GM12878 (cell line): ENCODE measurements at regions of chr12 and their contacts with region 1.

Region 1: GRCh38 chr12:124906606-124907261 is 7.7 kb downstream of the UBC start:
- DNase-seq: peak; percentile 87
- ATAC-seq: peak; percentile 59
- H3K4me3 ChIP-seq: no peak overlapping the region
- H3K27ac ChIP-seq: peak overlapping the region; percentile 47
- H3K4me1 ChIP-seq: peaks cover 34% of the 10 kb centered on the region
- H3K27me3 ChIP-seq: no peaks in the 10 kb centered on the region
- CTCF ChIP-seq: peak; percentile 91 to 100 (median 99); a peak in 5 of 6 replicates
- EP300 ChIP-seq: no peak
- POLR2A ChIP-seq: no peak
- RAD21 ChIP-seq: peak; percentile 98

Region 2: DNA sequence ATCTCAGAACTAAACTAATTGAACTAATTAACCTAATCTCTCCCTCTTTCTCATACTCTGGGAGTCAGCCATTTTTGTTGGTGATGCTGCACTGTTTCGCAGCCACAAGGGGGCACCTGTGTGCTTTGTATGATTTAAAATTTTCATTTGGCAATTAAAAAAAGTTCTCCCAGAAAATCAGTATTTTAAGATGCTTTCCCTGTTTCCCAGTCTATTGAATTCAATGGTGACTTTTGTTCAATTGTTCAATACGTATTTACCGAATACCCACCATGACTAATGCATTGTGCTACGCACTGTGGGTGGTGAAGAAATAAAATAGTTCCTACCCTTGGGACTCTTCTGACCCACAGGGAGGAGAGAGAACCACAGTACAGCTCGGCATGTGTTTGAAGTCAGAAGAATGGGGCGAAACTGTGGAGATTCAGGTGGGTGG is 870.0 kb before region 1 on chr12:
- CTCF ChIA-PET with region 1: interaction called, 7 read pairs
- POLR2A ChIA-PET with region 1: no interaction called
- RAD21 ChIA-PET with region 1: no interaction called
- SMC1A ChIA-PET with region 1: no interaction called
- in situ Hi-C with region 1: loop called (anchors 10 kb)
- intact Hi-C with region 1: loop called (anchors 5 kb)
- DNase-seq: peak; percentile 27
- ATAC-seq: peak; percentile 80
- H3K4me3 ChIP-seq: no peak overlapping the region
- H3K27ac ChIP-seq: no peak overlapping the region
- H3K4me1 ChIP-seq: no peaks in the 10 kb centered on the region
- H3K27me3 ChIP-seq: no peaks in the 10 kb centered on the region
- CTCF ChIP-seq: peak; percentile 80 to 89 (median 84)
- EP300 ChIP-seq: no peak
- POLR2A ChIP-seq: no peak
- RAD21 ChIP-seq: peak; percentile 92

Region 3: GRCh38 chr12:124829008-124829707 is 77.6 kb before region 1 on chr12:
- CTCF ChIA-PET with region 1: interaction called, 30 read pairs
- POLR2A ChIA-PET with region 1: interaction called, 3 read pairs
- RAD21 ChIA-PET with region 1: interaction called, 13 read pairs
- SMC1A ChIA-PET with region 1: interaction called, 22 read pairs
- in situ Hi-C with region 1: no loop called
- intact Hi-C with region 1: no loop called
- DNase-seq: no peak
- ATAC-seq: 0 out of 3 replicates have a peak, but pooled peaks have one; percentile 9
- H3K4me3 ChIP-seq: no peak overlapping the region
- H3K27ac ChIP-seq: peak overlapping the region; percentile 20; the same call in 1 of the 2 replicates
- H3K4me1 ChIP-seq: peaks cover 17% of the 10 kb centered on the region
- H3K27me3 ChIP-seq: no peaks in the 10 kb centered on the region
- CTCF ChIP-seq: no peak
- EP300 ChIP-seq: no peak
- POLR2A ChIP-seq: no peak
- RAD21 ChIP-seq: no peak

Region 4: DNA sequence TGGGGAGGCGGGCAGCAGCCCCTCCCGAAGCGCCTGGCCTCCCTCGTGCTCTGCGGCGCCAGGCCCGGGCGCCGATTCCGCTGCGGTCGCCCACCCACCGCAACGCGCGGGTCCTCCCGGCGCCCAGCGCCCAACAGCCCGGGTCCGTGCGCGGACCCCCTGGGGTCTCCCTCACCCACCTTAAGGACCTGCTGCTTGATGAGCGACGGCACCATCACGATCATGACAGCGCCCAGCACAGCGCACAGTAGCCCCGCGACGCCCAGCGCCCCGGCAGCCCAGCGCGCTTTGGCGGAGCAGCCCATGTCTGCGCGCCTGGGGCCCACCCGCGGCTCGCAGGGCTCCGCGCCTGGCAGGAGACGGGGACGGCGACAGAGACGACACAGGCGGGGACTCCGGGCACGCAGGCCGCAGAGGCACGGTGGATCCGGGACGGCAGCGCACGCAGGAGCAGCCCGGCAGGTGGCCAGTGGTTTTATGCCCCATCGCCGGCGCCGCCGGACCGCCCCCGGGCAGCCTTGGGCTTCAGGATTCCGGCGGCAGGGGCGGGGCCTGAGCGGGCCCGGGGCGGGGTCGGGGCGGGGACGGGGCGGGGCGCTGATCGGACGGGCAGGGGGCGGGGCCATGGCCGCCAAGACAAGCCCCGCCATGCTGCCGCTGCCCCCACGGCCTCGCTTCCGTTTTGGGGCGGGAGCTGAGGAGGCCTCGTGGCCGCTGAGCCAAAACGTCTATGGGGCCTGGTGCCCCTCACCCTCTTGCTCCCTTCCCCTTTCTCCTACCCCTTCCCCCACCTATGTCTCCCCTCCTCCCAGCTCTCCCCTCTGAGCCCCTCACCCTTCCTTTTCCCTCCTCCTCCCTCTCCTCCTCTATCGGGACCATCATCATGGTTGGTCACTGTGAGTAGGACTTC is 43.1 kb before region 1 on chr12 and contains the start of gene SCARB1:
- CTCF ChIA-PET with region 1: interaction called, 48 read pairs
- POLR2A ChIA-PET with region 1: interaction called, 15 read pairs
- RAD21 ChIA-PET with region 1: interaction called, 46 read pairs
- SMC1A ChIA-PET with region 1: interaction called, 21 read pairs
- in situ Hi-C with region 1: no loop called
- intact Hi-C with region 1: loop called (anchors 2 kb)
- DNase-seq: peak; percentile 26
- ATAC-seq: peak; percentile 84
- H3K4me3 ChIP-seq: peak within 1 kb of the TSS; percentile 97
- H3K27ac ChIP-seq: peak within 1 kb of the TSS; percentile 80
- H3K4me1 ChIP-seq: peaks cover 11% of the 10 kb centered on the region
- H3K27me3 ChIP-seq: no peaks in the 10 kb centered on the region
- CTCF ChIP-seq: no peak
- EP300 ChIP-seq: no peak
- POLR2A ChIP-seq: peak; percentile 98
- RAD21 ChIP-seq: no peak
- polyA plus RNA-seq, gene SCARB1: 0.34 to 3.3 TPM

Region 5: DNA sequence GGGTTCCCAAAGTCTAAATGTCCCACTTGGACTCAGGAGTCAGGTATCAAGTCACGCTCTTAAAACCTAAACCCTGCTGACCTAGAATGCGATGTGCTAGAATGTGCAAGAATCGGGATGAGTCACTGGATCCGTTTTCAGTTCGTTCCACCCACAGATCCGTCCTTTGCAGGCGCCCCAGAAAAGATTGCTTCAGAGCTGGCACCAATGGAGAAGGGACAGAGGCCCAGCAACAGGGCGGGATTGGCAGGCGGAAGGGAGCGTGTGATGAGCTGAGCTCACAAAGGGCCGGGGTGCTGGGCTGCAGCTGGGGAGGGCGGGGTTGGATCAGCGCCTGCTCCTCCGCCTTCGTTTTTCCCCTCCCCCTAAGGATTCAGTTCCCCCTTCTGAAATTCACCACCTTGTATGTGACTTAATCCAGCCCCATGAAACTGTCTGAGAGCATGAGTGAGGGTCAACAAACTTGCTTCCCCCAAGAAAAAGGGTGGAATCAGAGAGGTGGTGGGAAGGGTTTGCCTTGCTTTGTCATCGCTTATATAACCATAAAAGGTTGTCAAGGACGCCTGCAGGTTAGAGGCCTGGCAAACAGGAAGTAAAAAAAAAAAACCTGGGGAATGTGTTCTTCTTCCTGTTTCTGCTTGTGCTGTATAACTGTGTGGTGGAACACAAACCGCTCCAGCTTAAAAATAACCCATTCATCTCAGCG is 10.6 kb after region 1 on chr12:
- CTCF ChIA-PET with region 1: interaction called, 160 read pairs
- POLR2A ChIA-PET with region 1: interaction called, 46 read pairs
- RAD21 ChIA-PET with region 1: interaction called, 104 read pairs
- SMC1A ChIA-PET with region 1: interaction called, 143 read pairs
- in situ Hi-C with region 1: no loop called
- intact Hi-C with region 1: no loop called
- DNase-seq: peak; percentile 98
- ATAC-seq: peak; percentile 71
- H3K4me3 ChIP-seq: peak overlapping the region; percentile 97
- H3K27ac ChIP-seq: peak overlapping the region; percentile 100
- H3K4me1 ChIP-seq: peaks cover 35% of the 10 kb centered on the region
- H3K27me3 ChIP-seq: no peaks in the 10 kb centered on the region
- CTCF ChIP-seq: no peak
- EP300 ChIP-seq: peak; percentile 75 to 93
- POLR2A ChIP-seq: peak; percentile 76
- RAD21 ChIP-seq: no peak

Region 6: DNA sequence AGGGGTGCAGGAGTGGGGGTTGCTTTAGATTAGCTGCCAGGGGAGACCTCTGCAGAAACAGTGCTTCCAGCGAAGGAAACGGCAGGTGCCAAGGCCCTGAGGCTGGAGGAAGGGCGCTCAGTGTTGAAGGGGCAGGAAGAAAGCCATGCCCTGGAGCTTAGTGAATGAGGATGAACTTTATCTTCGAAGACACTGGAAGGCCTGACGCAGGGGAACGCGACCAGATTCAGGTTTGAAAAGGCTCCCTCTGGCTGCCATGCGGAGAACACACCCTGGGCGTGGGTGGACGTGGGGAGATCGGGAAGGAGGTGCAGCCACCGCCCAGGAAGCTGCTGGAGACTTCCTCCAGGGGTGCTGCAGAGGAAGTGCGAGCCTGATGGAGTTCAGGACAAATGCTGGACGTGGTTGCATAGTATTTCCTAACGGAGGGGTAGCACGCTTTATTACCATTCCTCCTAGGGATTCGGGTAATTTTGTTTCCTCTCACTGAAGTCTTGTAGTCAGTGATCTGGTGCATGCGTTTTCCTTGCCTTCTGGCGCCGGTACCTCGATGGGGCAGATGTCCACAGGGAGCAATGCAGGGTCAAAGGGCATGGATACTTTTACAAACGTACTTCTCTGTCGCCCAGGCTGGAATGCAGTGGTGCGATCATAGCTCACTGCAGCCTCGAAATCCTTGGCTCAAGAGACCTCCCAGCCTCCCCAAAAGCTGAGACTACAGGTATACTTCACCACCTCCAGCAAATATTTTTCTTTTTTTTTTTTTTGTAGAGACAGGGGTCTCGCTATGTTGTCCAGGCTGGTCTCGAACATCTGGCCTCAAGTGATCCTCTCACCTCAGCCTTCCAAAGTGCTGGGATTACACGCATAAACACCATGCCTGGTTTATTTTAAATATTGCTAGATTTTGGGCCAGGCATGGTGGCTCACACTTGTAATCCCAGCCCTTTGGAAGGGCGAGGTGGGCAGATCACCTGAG is 34.1 kb after region 1 on chr12:
- CTCF ChIA-PET with region 1: interaction called, 523 read pairs
- POLR2A ChIA-PET with region 1: interaction called, 24 read pairs
- RAD21 ChIA-PET with region 1: interaction called, 115 read pairs
- SMC1A ChIA-PET with region 1: interaction called, 92 read pairs
- in situ Hi-C with region 1: no loop called
- intact Hi-C with region 1: loop called (anchors 1 kb)
- DNase-seq: peak; percentile 82
- ATAC-seq: peak; percentile 74
- H3K4me3 ChIP-seq: peak overlapping the region; percentile 68
- H3K27ac ChIP-seq: peak overlapping the region; percentile 97
- H3K4me1 ChIP-seq: peaks cover 17% of the 10 kb centered on the region
- H3K27me3 ChIP-seq: no peaks in the 10 kb centered on the region
- CTCF ChIP-seq: peak; percentile 92 to 98 (median 93)
- EP300 ChIP-seq: no peak
- POLR2A ChIP-seq: peak; percentile 68
- RAD21 ChIP-seq: peak; percentile 63